Activated CD4-positive, alpha-beta T cell treated with anti-CD3 and anti-CD28 coated beads, Interleukin-2, amount 10 ng/mL, durations not matched to agents 7 days and 5 days (primary cell): ENCODE measurements at regions of chr9 and their contacts with region 1.

Region 1: DNA sequence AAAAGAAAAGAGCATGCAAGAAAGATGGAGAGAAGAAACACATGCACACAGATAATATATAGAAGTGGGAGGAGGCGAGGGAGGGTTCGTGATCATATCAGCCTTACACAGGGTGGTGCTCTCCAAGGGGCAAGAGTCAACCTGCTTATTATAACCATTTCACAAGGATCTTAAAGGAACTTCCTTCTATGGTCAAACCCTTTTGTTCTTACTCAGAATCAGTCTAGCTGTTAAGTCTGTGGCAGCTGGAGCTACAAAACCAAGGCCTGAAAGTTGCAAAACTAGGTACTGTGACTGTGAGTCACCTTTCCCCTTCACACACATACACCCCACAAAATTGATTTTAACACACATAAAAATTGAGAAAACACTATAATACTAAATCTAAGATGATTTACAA is 18.5 kb upstream of the ERMP1 start:
- DNase-seq: peak; percentile 59
- H3K4me3 Mint-ChIP-seq: no peak overlapping the region
- H3K27ac Mint-ChIP-seq: peak overlapping the region; percentile 60
- H3K4me1 Mint-ChIP-seq: peaks cover 62% of the 10 kb centered on the region
- H3K27me3 Mint-ChIP-seq: no peaks in the 10 kb centered on the region

Region 2: GRCh38 chr9:5863092-5863746 is 11.8 kb after region 1 on chr9:
- CTCF ChIA-PET with region 1: interaction called, 14 read pairs
- POLR2A ChIA-PET with region 1: no interaction called
- DNase-seq: no peak
- H3K4me3 Mint-ChIP-seq: no peak overlapping the region
- H3K27ac Mint-ChIP-seq: no peak overlapping the region
- H3K4me1 Mint-ChIP-seq: no peaks in the 10 kb centered on the region
- H3K27me3 Mint-ChIP-seq: no peaks in the 10 kb centered on the region

Region 3: GRCh38 chr9:5892456-5893133 is 41.1 kb after region 1 on chr9:
- CTCF ChIA-PET with region 1: no interaction called
- POLR2A ChIA-PET with region 1: no interaction called
- DNase-seq: no peak
- H3K4me3 Mint-ChIP-seq: no peak overlapping the region
- H3K27ac Mint-ChIP-seq: no peak overlapping the region
- H3K4me1 Mint-ChIP-seq: no peaks in the 10 kb centered on the region
- H3K27me3 Mint-ChIP-seq: peaks cover 3% of the 10 kb centered on the region

Region 4: GRCh38 chr9:6034954-6035353 is 183.5 kb after region 1 on chr9:
- CTCF ChIA-PET with region 1: no interaction called
- POLR2A ChIA-PET with region 1: no interaction called
- DNase-seq: no peak
- H3K4me3 Mint-ChIP-seq: no peak overlapping the region
- H3K27ac Mint-ChIP-seq: no peak overlapping the region
- H3K4me1 Mint-ChIP-seq: no peaks in the 10 kb centered on the region
- H3K27me3 Mint-ChIP-seq: peaks cover 17% of the 10 kb centered on the region